Breast epithelium (tissue), 4 donors: ENCODE measurements at regions of chr1 and their contacts with region 1.

Region 1: DNA sequence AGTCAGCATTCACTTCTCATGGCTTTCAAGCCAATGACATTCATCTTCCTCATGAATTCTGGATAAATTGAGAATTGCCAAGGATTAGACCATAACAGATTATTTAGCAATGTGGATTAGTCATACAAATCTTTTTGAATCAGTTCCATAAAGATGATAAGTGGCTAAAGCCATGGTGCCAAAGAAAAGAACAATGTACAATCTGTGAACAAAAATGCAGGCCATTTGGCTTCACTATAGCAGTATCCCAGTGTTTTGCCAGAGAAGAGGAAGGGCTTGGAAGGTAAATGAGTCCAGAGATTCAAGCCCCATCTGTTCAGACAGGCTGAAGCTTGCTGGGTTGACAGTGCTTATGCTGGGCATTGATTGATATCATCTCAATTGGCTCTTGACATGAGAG is 376.4 kb upstream of the LRRC7 start:
- DNase-seq: no peak
- H3K4me3 ChIP-seq: no peak overlapping the region
- H3K27ac ChIP-seq: no peak overlapping the region
- H3K4me1 ChIP-seq: no peaks in the 10 kb centered on the region
- H3K27me3 ChIP-seq: no peaks in the 10 kb centered on the region
- CTCF ChIP-seq: no peak
- POLR2A ChIP-seq: no peak

Region 2: DNA sequence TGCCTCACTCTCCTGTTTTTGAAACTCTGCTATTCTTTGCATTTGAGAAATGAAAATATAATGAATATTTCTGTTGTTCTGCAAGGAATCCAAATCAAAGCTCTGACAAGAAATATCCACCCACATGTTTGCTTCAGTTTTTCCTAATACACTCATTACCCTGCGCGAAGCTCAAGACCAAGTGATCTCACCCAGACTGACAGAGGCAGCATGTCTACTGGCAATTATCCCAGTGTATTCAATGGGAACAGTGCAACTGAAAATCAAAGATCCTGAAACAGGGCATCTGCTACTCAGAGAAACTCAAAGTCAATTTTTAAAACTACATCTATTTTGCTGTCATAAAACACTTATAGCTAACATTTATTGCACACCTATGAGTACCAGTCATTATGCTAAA is 55.4 kb after region 1 on chr1:
- intact Hi-C with region 1: loop called (anchors 2 kb)
- DNase-seq: no peak
- H3K4me3 ChIP-seq: no peak overlapping the region
- H3K27ac ChIP-seq: no peak overlapping the region
- H3K4me1 ChIP-seq: no peaks in the 10 kb centered on the region
- H3K27me3 ChIP-seq: no peaks in the 10 kb centered on the region
- CTCF ChIP-seq: no peak
- POLR2A ChIP-seq: no peak